ENCODE measurements at regions of chr18 and their contacts with region 1.

Region 1: GRCh38 chr18:778194-778927 is 33.7 kb downstream of the YES1 start:
- DNase-seq: no peak
- ATAC-seq: no peak

Region 2: DNA sequence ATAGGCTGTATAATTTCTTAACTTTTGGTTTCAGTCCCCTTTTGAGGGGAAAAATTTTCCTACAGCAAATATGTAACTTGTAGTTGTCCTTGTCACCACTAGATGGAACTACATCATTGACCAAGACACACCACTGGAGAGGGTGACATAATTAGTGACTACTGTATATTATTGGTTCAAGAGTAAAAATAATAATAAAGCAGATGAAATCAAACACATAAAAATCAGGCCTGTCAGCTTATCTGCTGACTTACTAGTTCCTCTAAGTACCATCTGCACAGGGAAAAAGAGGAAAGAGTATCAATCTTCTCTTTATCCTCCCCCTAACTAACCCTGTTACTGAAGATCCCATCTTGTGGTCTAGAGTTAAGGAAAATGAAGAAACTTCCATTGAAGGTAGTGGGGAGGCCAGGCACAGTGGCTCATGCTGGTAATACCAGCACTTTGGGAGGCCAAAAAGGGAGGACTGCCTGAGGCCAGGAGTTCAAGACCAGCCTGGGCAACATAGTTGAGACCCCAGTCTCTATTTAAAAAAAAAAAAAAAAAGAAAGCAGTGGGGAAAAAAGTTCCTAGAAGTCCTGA is 36.3 kb before region 1 on chr18:
- intact Hi-C with region 1: loop called in 1 of 2 experiments (anchors 2 kb)
- DNase-seq: no peak
- ATAC-seq: peak; percentile 65 to 75

Region 3: GRCh38 chr18:812376-813171 is 34.2 kb after region 1 on chr18:
- intact Hi-C with region 1: loop called in 1 of 2 experiments (anchors 5 kb)
- DNase-seq: peak; percentile 87
- ATAC-seq: peak; percentile 91 to 93